CD4-positive, alpha-beta memory T cell (primary cell): ENCODE measurements at regions of chr6 and their contacts with region 1.

Region 1: DNA sequence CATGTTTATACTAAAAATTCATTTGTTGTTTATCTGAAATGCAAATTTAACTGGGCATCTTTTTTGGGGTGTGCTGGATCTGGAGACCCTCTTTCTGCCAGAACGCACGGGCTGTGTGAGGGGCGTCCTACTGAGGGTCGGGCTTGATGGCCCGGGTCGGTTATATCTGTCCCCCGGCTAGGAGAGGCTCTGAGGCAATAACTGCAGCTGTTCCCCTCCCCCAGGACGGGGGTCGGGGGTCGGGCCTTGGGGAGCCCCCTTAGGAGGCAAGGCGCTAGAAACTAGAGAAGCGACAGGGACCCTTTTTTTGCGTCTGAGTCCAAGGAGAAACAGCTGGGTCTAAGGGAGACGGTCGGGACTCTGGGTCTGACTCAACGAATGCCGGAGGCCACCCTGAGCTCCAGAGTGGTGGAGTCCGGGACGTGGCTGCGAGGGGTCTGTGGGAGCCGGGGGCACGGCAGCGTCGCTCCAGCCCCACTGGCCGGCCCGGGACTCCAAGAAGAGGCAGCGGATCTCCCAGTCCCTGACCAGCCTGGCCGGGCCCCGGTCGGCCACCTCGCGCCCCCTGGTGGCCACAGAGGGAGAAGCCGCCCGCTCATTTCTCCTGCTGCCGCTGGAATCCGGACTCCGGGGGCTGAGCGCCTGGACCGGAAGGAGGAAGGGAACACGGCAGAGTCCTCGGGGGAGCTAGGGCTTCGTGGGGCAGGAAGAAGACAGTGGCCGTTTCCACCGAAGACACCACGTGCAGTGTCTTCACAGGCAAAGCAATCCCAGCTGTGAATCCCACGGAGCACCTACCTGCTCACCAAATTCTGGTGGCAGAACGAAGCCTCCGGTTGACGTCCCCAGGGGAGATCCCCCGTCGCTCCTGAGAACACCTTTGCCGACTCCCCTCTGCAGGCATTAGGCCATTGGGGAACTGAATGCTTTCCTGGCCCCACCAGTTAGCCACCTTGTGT is 24.0 kb upstream of the SCML4 start:
- DNase-seq: peak; percentile 71 to 83 (median 75)
- H3K4me3 ChIP-seq: peak overlapping the region; percentile 57 to 73
- H3K4me3 Mint-ChIP-seq: peak overlapping the region; percentile 79 to 90 (median 85)
- H3K27ac ChIP-seq: peak overlapping the region; percentile 33
- H3K27ac Mint-ChIP-seq: peak overlapping the region; percentile 80 to 90 (median 88)
- H3K4me1 ChIP-seq: peaks cover 22% of the 10 kb centered on the region
- H3K4me1 Mint-ChIP-seq: peaks cover 17 to 43% (median 23%) of the 10 kb centered on the region in 4 donors
- H3K27me3 ChIP-seq: no peaks in the 10 kb centered on the region
- H3K27me3 Mint-ChIP-seq: no peaks in the 10 kb centered on the region

Region 2: DNA sequence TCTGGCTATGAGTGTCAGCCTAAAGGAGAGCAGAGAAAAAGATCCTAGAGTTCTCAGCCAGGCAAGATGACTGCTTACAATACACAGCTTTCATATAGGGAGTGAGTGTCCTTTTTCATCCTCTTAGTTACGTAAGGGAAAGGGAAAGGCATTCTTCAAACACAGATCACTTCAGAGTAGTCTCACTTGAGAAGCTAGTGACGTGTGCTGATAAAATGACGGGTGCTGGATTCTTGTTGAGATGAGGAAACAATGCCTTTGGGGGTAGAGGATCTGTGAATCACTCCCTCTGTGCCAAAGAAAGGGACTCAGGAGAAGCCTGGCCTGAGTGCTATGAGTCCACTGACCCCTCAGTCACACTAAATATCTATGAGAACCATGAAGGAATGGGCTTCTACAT is 1101.5 kb before region 1 on chr6:
- CTCF ChIA-PET with region 1: no interaction called
- POLR2A ChIA-PET with region 1: no interaction called
- intact Hi-C with region 1: no loop called
- DNase-seq: no peak
- H3K4me3 ChIP-seq: no peak overlapping the region
- H3K4me3 Mint-ChIP-seq: no peak overlapping the region
- H3K27ac ChIP-seq: no peak overlapping the region
- H3K27ac Mint-ChIP-seq: no peak overlapping the region
- H3K4me1 ChIP-seq: no peaks in the 10 kb centered on the region
- H3K4me1 Mint-ChIP-seq: no peaks in the 10 kb centered on the region
- H3K27me3 ChIP-seq: no peaks in the 10 kb centered on the region
- H3K27me3 Mint-ChIP-seq: peaks cover 13 to 21% of the 10 kb centered on the region in 2 donors

Region 3: GRCh38 chr6:107674995-107675738 is 173.0 kb before region 1 on chr6:
- CTCF ChIA-PET with region 1: interaction called, 96 read pairs
- POLR2A ChIA-PET with region 1: interaction called, 7 read pairs
- intact Hi-C with region 1: loop called (anchors 1 kb)
- DNase-seq: peak; percentile 83 to 86 (median 84)
- H3K4me3 ChIP-seq: peak overlapping the region in 1 of 2 donors; percentile 6
- H3K4me3 Mint-ChIP-seq: peak overlapping the region in 6 of 8 donors; percentile 49 to 81 (median 64)
- H3K27ac ChIP-seq: no peak overlapping the region
- H3K27ac Mint-ChIP-seq: peak overlapping the region; percentile 32 to 92 (median 91)
- H3K4me1 ChIP-seq: peaks cover 17% of the 10 kb centered on the region
- H3K4me1 Mint-ChIP-seq: peaks cover 6 to 14% (median 11%) of the 10 kb centered on the region in 4 donors
- H3K27me3 ChIP-seq: no peaks in the 10 kb centered on the region
- H3K27me3 Mint-ChIP-seq: no peaks in the 10 kb centered on the region

Region 4: GRCh38 chr6:107716688-107717089 is 131.4 kb before region 1 on chr6:
- CTCF ChIA-PET with region 1: interaction called, 28 read pairs
- POLR2A ChIA-PET with region 1: interaction called, 4 read pairs
- intact Hi-C with region 1: no loop called
- DNase-seq: peak; percentile 83 to 92 (median 87)
- H3K4me3 ChIP-seq: no peak overlapping the region
- H3K4me3 Mint-ChIP-seq: peak overlapping the region in 7 of 8 donors; percentile 40 to 78 (median 74)
- H3K27ac ChIP-seq: no peak overlapping the region
- H3K27ac Mint-ChIP-seq: peak overlapping the region; percentile 89 to 98 (median 94)
- H3K4me1 ChIP-seq: peaks cover 66% of the 10 kb centered on the region
- H3K4me1 Mint-ChIP-seq: peaks cover 57 to 90% (median 75%) of the 10 kb centered on the region in 4 donors
- H3K27me3 ChIP-seq: no peaks in the 10 kb centered on the region
- H3K27me3 Mint-ChIP-seq: no peaks in the 10 kb centered on the region

Region 5: DNA sequence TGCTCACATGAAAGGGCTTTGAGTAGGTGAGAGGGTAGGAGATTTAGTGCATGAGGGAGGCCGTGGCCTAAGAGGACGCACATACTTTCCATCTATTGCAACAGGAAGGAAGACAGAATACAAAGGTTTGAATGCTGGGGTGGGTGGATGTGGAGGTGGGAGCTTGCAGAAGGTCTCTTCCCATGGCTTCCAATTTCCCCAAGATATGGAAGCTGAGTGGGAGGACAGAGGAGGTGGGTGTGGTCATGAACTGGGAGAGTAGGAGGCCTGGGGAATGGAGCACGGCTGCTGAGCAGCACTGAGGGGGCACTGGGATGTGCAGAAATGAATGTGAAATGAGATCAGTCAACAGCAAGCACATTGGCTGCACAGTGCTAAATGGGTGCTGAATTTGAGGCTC is 94.3 kb before region 1 on chr6:
- CTCF ChIA-PET with region 1: interaction called, 10 read pairs
- POLR2A ChIA-PET with region 1: interaction called, 5 read pairs
- intact Hi-C with region 1: no loop called
- DNase-seq: no peak
- H3K4me3 ChIP-seq: no peak overlapping the region
- H3K4me3 Mint-ChIP-seq: peak overlapping the region in 7 of 8 donors; percentile 57 to 77 (median 64)
- H3K27ac ChIP-seq: no peak overlapping the region
- H3K27ac Mint-ChIP-seq: peak overlapping the region in 6 of 7 donors; percentile 47 to 90 (median 78)
- H3K4me1 ChIP-seq: peaks cover 64% of the 10 kb centered on the region
- H3K4me1 Mint-ChIP-seq: peaks cover 56 to 91% (median 77%) of the 10 kb centered on the region in 4 donors
- H3K27me3 ChIP-seq: no peaks in the 10 kb centered on the region
- H3K27me3 Mint-ChIP-seq: no peaks in the 10 kb centered on the region

Region 6: DNA sequence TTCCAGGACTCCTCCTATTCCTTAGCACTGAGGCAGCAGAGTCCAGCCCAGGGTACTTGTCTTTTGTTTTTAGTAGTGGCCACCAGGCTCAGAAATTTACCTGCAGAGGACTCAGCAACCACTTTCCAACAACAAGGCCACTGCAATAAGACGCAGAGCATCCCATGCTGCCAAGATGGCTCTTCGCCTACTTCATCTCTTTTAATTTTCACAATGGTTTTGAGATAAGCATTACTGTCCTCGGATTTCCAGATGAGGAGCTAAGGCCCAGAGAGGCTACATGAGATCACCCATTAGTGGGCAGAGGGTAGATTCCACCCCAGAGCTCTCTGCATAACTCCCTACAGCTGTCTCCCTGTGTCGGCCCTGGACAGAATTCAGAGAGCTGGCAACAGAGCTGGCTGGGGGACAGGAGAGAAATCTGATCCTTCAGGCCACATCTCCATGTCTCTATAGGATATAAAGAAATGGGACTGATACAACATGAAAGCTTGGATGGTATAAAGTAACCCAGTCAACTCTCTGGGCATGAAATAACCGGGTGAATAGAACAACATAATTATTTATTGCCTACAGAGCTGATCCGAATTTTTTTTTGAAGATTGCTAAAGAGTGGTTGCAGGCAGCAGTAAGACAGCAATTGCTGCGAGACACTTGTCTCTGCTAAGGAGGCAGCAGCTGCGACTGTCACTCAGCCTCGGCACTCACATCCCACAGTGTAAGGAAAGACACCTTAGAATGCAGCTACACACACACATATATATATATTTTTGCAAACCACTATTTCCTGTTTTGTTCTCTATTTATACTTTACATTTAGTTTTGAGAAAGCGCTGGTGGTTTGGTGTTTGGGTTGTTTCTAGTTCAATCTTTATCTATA is 61.2 kb before region 1 on chr6:
- CTCF ChIA-PET with region 1: interaction called, 48 read pairs
- POLR2A ChIA-PET with region 1: interaction called, 20 read pairs
- intact Hi-C with region 1: no loop called
- DNase-seq: peak; percentile 46 to 62 (median 58)
- H3K4me3 ChIP-seq: peak overlapping the region in 1 of 2 donors; percentile 33
- H3K4me3 Mint-ChIP-seq: peak overlapping the region; percentile 78 to 98 (median 84)
- H3K27ac ChIP-seq: peak overlapping the region; percentile 45
- H3K27ac Mint-ChIP-seq: peak overlapping the region; percentile 85 to 98 (median 95)
- H3K4me1 ChIP-seq: peaks cover 89% of the 10 kb centered on the region
- H3K4me1 Mint-ChIP-seq: peaks cover 68 to 91% (median 78%) of the 10 kb centered on the region in 4 donors
- H3K27me3 ChIP-seq: no peaks in the 10 kb centered on the region
- H3K27me3 Mint-ChIP-seq: no peaks in the 10 kb centered on the region

Region 7: DNA sequence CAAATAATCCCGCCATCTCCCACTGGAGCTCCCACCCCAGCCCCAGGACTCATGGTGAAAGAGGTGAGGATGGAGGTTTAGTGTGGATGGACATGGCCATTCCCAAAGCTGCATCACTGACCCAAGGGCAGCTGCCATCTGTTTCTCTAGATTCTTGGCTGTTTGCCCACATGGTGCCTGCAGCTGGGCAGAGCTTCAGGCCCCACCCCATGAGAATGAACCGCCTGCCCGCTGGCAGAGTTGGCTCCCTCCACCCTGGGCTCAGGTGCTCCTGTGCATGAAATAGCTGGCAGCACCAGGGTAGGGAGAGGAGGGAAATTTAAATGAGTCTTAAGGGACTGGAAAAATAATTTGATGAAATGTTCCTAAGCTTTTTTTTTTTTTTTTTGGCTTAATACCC is 41.4 kb before region 1 on chr6:
- CTCF ChIA-PET with region 1: interaction called, 34 read pairs
- POLR2A ChIA-PET with region 1: interaction called, 5 read pairs
- intact Hi-C with region 1: no loop called
- DNase-seq: no peak
- H3K4me3 ChIP-seq: no peak overlapping the region
- H3K4me3 Mint-ChIP-seq: no peak overlapping the region
- H3K27ac ChIP-seq: no peak overlapping the region
- H3K27ac Mint-ChIP-seq: peak overlapping the region in 2 of 7 donors; percentile 36 to 76
- H3K4me1 ChIP-seq: peaks cover 61% of the 10 kb centered on the region
- H3K4me1 Mint-ChIP-seq: peaks cover 47 to 86% (median 63%) of the 10 kb centered on the region in 4 donors
- H3K27me3 ChIP-seq: no peaks in the 10 kb centered on the region
- H3K27me3 Mint-ChIP-seq: no peaks in the 10 kb centered on the region

Region 8: GRCh38 chr6:107866606-107867301 is 18.6 kb after region 1 on chr6:
- CTCF ChIA-PET with region 1: interaction called, 95 read pairs
- POLR2A ChIA-PET with region 1: interaction called, 5 read pairs
- intact Hi-C with region 1: no loop called
- DNase-seq: peak; percentile 43 to 52 (median 49)
- H3K4me3 ChIP-seq: no peak overlapping the region
- H3K4me3 Mint-ChIP-seq: peak overlapping the region in 2 of 8 donors; percentile 11 to 20
- H3K27ac ChIP-seq: no peak overlapping the region
- H3K27ac Mint-ChIP-seq: peak overlapping the region in 3 of 7 donors; percentile 22 to 75 (median 42)
- H3K4me1 ChIP-seq: peaks cover 6% of the 10 kb centered on the region
- H3K4me1 Mint-ChIP-seq: peaks cover 0 to 3% (median 2%) of the 10 kb centered on the region in 4 donors
- H3K27me3 ChIP-seq: no peaks in the 10 kb centered on the region
- H3K27me3 Mint-ChIP-seq: peaks cover 0 to 2% of the 10 kb centered on the region in 2 donors